ENCODE measurements at regions of chr3 and their contacts with region 1.

Region 1: DNA sequence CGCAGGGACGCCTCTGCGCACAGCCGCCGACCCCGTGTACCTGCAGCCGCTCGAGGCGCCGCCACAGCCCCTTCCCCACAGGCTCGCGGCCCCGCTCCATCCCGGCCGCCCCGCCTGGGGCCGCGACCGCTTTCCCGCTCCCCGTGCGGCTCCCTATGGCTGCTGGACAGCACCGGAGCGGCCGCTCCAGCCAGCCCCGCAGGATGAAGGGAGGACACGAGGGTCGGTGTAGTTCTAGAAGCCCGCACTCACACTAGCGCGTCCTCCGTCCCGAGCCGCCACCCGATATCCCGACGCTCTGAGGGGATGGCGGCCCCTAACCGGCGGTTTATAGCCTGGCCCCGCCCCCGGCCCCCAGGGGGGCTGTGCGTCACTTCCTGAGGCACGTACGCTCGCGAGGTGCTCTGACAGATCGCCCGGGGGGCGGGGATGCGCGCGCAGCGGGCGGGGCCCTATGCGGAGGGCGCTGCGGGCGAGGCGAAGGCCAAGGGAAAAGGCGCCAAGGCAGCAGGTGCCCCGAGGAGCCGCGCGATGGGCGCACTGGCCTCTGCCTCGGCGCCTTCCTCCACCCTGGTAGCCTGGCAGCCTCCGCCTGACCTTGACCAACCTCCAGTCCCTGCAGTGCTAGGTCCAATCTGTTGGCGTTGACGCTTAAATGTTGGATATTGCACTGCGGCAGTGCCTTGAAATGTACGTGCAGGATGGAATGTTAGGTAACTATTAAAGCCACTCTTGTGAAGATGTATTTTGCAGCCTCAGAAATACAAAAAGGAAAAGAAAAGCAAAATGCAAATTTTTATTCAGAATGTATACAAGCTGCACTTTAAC is at the start of gene TFRC:
- DNase-seq: peak; percentile 99
- ATAC-seq: peak; percentile 94
- H3K4me3 Mint-ChIP-seq: peak within 1 kb of the TSS; percentile 99
- H3K27ac Mint-ChIP-seq: peak within 1 kb of the TSS; percentile 91
- H3K4me1 Mint-ChIP-seq: peaks cover 47% of the 10 kb centered on the region
- H3K27me3 Mint-ChIP-seq: no peaks in the 10 kb centered on the region
- CTCF ChIP-seq: no peak
- total RNA-seq, gene TFRC: 238 and 290 TPM in 2 replicates

Region 2: DNA sequence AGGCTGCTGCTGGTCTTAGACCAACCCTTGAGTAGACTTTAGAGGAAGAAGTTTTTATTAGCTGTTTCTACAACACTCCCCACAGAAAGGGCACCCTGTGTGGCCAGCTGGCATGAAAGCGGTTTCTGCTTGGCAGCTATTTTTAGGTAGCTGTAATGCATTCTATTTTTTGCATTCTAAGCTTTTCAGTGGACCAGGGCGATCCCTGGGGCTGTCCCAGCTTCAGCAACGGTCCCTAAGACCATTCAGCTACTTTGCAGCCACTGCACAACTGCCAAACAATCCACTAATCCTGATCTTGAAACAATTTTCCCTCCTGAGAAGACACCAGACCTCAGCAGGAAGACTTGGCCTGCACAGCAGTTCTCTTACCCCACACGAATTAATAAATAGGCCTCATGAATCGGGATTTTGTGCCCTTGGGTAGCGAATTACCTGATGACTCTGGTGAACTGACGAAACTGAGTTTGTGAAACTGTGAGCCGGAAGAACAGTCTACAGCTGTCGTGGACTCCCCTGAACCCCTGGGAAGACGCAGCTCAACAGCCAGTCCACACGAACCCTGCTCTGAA is 14.5 kb after region 1 on chr3:
- CTCF ChIA-PET with region 1: interaction called, 3 read pairs
- POLR2A ChIA-PET with region 1: interaction called, 5 read pairs
- intact Hi-C with region 1: loop called (anchors 2 kb)
- DNase-seq: peak; percentile 18
- ATAC-seq: peak; percentile 82
- H3K4me3 Mint-ChIP-seq: peak overlapping the region; percentile 61
- H3K27ac Mint-ChIP-seq: peak overlapping the region; percentile 89
- H3K4me1 Mint-ChIP-seq: peaks cover 42% of the 10 kb centered on the region
- H3K27me3 Mint-ChIP-seq: no peaks in the 10 kb centered on the region
- CTCF ChIP-seq: no peak

Region 3: DNA sequence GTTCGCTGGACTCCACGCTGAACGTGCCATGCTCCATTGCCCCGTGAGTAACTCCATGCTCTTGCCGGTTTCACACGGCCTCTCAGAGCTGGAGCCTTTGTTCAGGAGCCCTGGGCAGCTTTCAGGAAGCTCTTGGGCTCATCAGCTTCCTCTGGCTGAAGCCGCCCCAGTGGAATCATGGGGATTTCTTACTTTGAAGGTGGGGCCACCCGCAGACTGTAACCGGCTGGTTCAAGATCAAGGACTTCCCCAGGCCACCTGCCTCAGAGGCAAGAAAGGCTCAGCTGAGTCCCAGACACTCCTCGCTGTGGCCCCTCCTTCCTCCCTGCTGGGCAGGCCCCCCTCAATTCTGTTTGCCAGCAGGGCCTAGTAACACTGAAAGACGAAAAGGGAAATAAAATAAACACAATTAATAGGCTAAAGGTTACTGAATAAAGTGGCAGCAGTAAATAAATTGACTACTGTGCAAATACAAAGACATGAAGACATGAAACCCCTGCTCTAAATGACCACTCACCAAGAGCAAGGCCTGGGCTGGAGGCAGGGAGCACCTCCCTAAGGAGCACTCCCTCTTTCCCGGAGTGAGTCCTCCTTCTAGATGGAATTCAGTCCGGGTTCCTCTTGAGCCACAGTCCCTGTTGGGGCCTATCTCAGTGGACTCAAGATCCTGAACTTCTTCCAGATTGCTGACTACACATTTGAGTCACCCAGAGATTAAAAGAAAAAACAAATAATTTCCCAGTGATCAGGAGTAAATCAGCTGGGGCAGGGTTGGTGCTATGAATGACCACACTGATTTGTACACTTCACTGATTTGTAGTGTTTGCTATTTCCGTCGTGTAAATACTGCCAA is 78.2 kb after region 1 on chr3:
- CTCF ChIA-PET with region 1: no interaction called
- POLR2A ChIA-PET with region 1: interaction called, 14 read pairs
- intact Hi-C with region 1: loop called (anchors 1 kb)
- DNase-seq: peak; percentile 50
- ATAC-seq: peak; percentile 99
- H3K4me3 Mint-ChIP-seq: peak overlapping the region; percentile 73
- H3K27ac Mint-ChIP-seq: peak overlapping the region; percentile 92
- H3K4me1 Mint-ChIP-seq: peaks cover 22% of the 10 kb centered on the region
- H3K27me3 Mint-ChIP-seq: no peaks in the 10 kb centered on the region
- CTCF ChIP-seq: no peak

Region 4: GRCh38 chr3:196192036-196192523 is 110.1 kb after region 1 on chr3:
- CTCF ChIA-PET with region 1: interaction called, 9 read pairs
- POLR2A ChIA-PET with region 1: interaction called, 49 read pairs
- intact Hi-C with region 1: loop called (anchors 1 kb)
- DNase-seq: peak; percentile 68
- ATAC-seq: peak; percentile 73
- H3K4me3 Mint-ChIP-seq: peak overlapping the region; percentile 70
- H3K27ac Mint-ChIP-seq: peak overlapping the region; percentile 98
- H3K4me1 Mint-ChIP-seq: peaks cover 62% of the 10 kb centered on the region
- H3K27me3 Mint-ChIP-seq: no peaks in the 10 kb centered on the region
- CTCF ChIP-seq: no peak

Region 5: GRCh38 chr3:196227629-196228493 is 145.9 kb after region 1 on chr3:
- CTCF ChIA-PET with region 1: no interaction called
- POLR2A ChIA-PET with region 1: no interaction called
- intact Hi-C with region 1: no loop called
- DNase-seq: no peak
- ATAC-seq: no peak
- H3K4me3 Mint-ChIP-seq: no peak overlapping the region
- H3K27ac Mint-ChIP-seq: no peak overlapping the region
- H3K4me1 Mint-ChIP-seq: peaks cover 12% of the 10 kb centered on the region
- H3K27me3 Mint-ChIP-seq: no peaks in the 10 kb centered on the region
- CTCF ChIP-seq: no peak

Region 6: GRCh38 chr3:196432137-196432879 is 350.3 kb after region 1 on chr3 and contains the start of gene UBXN7:
- CTCF ChIA-PET with region 1: no interaction called
- POLR2A ChIA-PET with region 1: no interaction called
- intact Hi-C with region 1: loop called (anchors 5 kb)
- DNase-seq: peak; percentile 92
- ATAC-seq: peak; percentile 81
- H3K4me3 Mint-ChIP-seq: peak within 1 kb of the TSS; percentile 96
- H3K27ac Mint-ChIP-seq: peak within 1 kb of the TSS; percentile 80
- H3K4me1 Mint-ChIP-seq: peaks cover 22% of the 10 kb centered on the region
- H3K27me3 Mint-ChIP-seq: no peaks in the 10 kb centered on the region
- CTCF ChIP-seq: no peak
- total RNA-seq, gene UBXN7: 60.8 and 66.5 TPM in 2 replicates

Measured in activated B cell treated with CpG ODN at 0.5 μM for 24 hours (primary cell).